ENCODE measurements at regions of chr3 and their contacts with region 1.

Region 1: GRCh38 chr3:133573054-133573628 is 345 bp upstream of the CDV3 start:
- DNase-seq: peak; percentile 100
- ATAC-seq: peak; percentile 89 to 91
- H3K4me3 ChIP-seq: peak overlapping the region; percentile 52 to 82 (median 63)
- H3K27ac ChIP-seq: peak overlapping the region; percentile 96 to 99 (median 98)
- H3K4me1 ChIP-seq: peaks cover 37% of the 10 kb centered on the region in 2 donors
- H3K27me3 ChIP-seq: no peaks in the 10 kb centered on the region
- CTCF ChIP-seq: no peak
- POLR2A ChIP-seq: peak in 1 of 2 donors; percentile 1

Region 2: GRCh38 chr3:132981719-132982118 is 591.4 kb before region 1 on chr3:
- in situ Hi-C with region 1: no loop called
- intact Hi-C with region 1: loop called (anchors 1 kb)
- DNase-seq: no peak
- ATAC-seq: no peak
- H3K4me3 ChIP-seq: no peak overlapping the region
- H3K27ac ChIP-seq: peak overlapping the region; percentile 79 to 88 (median 84)
- H3K4me1 ChIP-seq: peaks cover 38 to 39% of the 10 kb centered on the region in 2 donors
- H3K27me3 ChIP-seq: no peaks in the 10 kb centered on the region
- CTCF ChIP-seq: no peak
- POLR2A ChIP-seq: no peak

Region 3: DNA sequence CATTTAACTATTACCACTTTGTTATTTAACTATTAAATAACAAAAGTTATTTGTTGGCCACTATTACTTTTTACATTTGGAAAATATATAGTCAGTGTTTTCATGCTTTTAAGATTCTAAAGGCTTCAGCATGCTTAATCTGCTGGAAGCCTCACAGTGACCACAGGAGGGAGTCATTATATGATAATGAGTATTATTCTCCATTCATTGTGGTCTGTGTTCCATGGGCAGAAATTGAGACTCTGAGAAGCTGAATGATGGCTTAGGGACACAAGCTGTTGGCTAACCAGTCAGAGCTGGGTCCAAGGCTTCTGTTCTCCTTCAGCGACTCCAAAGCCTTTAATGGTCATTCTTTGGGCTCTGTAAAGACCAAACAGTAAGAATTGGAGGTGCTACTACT is 108.6 kb before region 1 on chr3:
- in situ Hi-C with region 1: loop called in 1 of 4 experiments (anchors 10 kb)
- intact Hi-C with region 1: loop called (anchors 2 kb)
- DNase-seq: no peak
- ATAC-seq: no peak
- H3K4me3 ChIP-seq: no peak overlapping the region
- H3K27ac ChIP-seq: no peak overlapping the region
- H3K4me1 ChIP-seq: peaks cover 29 to 35% of the 10 kb centered on the region in 2 donors
- H3K27me3 ChIP-seq: no peaks in the 10 kb centered on the region
- CTCF ChIP-seq: no peak
- POLR2A ChIP-seq: no peak

Region 4: GRCh38 chr3:133561679-133562078 is 11.5 kb before region 1 on chr3:
- in situ Hi-C with region 1: no loop called
- intact Hi-C with region 1: no loop called
- DNase-seq: no peak
- ATAC-seq: no peak
- H3K4me3 ChIP-seq: no peak overlapping the region
- H3K27ac ChIP-seq: no peak overlapping the region
- H3K4me1 ChIP-seq: no peaks in the 10 kb centered on the region
- H3K27me3 ChIP-seq: no peaks in the 10 kb centered on the region
- CTCF ChIP-seq: no peak
- POLR2A ChIP-seq: no peak

Region 5: GRCh38 chr3:133670525-133670995 is 97.4 kb after region 1 on chr3:
- in situ Hi-C with region 1: no loop called
- intact Hi-C with region 1: no loop called
- DNase-seq: no peak
- ATAC-seq: no peak
- H3K4me3 ChIP-seq: no peak overlapping the region
- H3K27ac ChIP-seq: no peak overlapping the region
- H3K4me1 ChIP-seq: peaks cover 0 to 3% of the 10 kb centered on the region in 2 donors
- H3K27me3 ChIP-seq: peaks cover 20 to 34% (median 25%) of the 10 kb centered on the region in 3 donors
- CTCF ChIP-seq: no peak
- POLR2A ChIP-seq: no peak

Region 6: GRCh38 chr3:133722935-133723334 is 149.8 kb after region 1 on chr3:
- in situ Hi-C with region 1: no loop called
- intact Hi-C with region 1: no loop called
- DNase-seq: no peak
- ATAC-seq: no peak
- H3K4me3 ChIP-seq: no peak overlapping the region
- H3K27ac ChIP-seq: no peak overlapping the region
- H3K4me1 ChIP-seq: no peaks in the 10 kb centered on the region
- H3K27me3 ChIP-seq: no peaks in the 10 kb centered on the region
- CTCF ChIP-seq: no peak
- POLR2A ChIP-seq: no peak

Region 7: GRCh38 chr3:133805527-133806475 is 232.7 kb after region 1 on chr3 and contains the start of gene SRPRB:
- in situ Hi-C with region 1: no loop called
- intact Hi-C with region 1: loop called (anchors 2 kb)
- DNase-seq: peak; percentile 92 to 93
- ATAC-seq: peak; percentile 98 to 99
- H3K4me3 ChIP-seq: peak within 1 kb of the TSS; percentile 74 to 96 (median 87)
- H3K27ac ChIP-seq: peak within 1 kb of the TSS; percentile 72 to 85 (median 80)
- H3K4me1 ChIP-seq: peaks cover 6 to 11% of the 10 kb centered on the region in 2 donors
- H3K27me3 ChIP-seq: no peaks in the 10 kb centered on the region
- CTCF ChIP-seq: no peak
- POLR2A ChIP-seq: peak; percentile 36 to 55
- total RNA-seq, gene SRPRB: 19.0 to 22.3 (median 20.6) TPM

Region 8: GRCh38 chr3:134364061-134364935 is 791.2 kb after region 1 on chr3:
- in situ Hi-C with region 1: no loop called
- intact Hi-C with region 1: loop called (anchors 10 kb)
- DNase-seq: peak; percentile 88 to 95
- ATAC-seq: peak; percentile 82 to 87
- H3K4me3 ChIP-seq: peak overlapping the region; percentile 39 to 49 (median 44)
- H3K27ac ChIP-seq: peak overlapping the region; percentile 72 to 99 (median 97)
- H3K4me1 ChIP-seq: peaks cover 81 to 98% of the 10 kb centered on the region in 2 donors
- H3K27me3 ChIP-seq: no peaks in the 10 kb centered on the region
- CTCF ChIP-seq: no peak
- POLR2A ChIP-seq: no peak